ENCODE measurements at regions of chr17 and their contacts with region 1.

Region 1: DNA sequence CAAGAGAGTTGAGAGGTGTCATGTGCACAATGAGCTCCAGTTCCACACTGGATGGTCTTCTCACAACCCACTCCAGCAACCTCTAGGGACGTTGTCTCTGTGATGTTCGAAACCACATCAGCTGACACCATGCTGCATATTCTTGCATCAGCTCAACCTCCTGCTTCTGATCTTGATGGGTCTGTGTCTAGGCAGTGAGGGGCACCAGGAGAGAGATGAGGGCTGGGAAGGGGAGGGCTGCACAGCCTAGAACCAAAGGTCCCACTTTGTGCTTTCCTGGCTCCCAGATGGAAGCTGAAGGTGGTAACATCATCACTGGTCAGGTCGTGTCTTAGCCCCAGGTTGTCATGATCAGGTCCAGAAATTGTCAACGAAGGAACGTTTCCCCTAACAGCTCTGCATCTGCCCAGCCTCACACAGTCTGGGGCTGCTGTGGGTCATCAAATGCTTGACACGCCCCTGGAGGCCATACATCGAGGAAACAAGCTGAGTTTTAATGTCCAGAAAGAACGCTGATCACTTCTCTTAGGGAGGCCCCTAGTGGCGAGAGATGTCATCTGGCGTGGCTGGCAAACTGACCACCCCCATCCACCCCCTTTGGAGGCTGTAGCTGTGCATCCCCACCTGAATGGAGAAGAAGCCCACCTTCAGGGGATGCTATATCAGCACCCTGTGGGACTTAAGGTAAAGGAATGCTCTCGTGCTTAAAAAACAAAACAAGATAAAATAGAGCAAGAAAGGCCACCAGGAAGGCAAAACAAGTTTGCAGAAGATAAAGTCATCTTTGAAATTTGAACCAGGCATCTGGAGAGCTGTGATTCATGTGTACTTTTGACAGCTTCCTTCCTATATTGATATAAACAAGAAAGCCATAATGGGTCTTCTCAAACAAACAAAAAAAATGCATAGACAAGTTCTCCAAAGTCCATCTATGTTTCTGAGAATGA is 58.3 kb downstream of the WIPI1 start:
- DNase-seq: peak; percentile 75
- ATAC-seq: peak; percentile 93
- H3K4me3 Mint-ChIP-seq: no peak overlapping the region
- H3K27ac Mint-ChIP-seq: no peak overlapping the region
- H3K4me1 Mint-ChIP-seq: peaks cover 28% of the 10 kb centered on the region
- H3K27me3 Mint-ChIP-seq: no peaks in the 10 kb centered on the region; the same call in 1 of the 2 replicates
- CTCF ChIP-seq: peak; percentile 29; the same call in 1 of the 2 replicates

Region 2: DNA sequence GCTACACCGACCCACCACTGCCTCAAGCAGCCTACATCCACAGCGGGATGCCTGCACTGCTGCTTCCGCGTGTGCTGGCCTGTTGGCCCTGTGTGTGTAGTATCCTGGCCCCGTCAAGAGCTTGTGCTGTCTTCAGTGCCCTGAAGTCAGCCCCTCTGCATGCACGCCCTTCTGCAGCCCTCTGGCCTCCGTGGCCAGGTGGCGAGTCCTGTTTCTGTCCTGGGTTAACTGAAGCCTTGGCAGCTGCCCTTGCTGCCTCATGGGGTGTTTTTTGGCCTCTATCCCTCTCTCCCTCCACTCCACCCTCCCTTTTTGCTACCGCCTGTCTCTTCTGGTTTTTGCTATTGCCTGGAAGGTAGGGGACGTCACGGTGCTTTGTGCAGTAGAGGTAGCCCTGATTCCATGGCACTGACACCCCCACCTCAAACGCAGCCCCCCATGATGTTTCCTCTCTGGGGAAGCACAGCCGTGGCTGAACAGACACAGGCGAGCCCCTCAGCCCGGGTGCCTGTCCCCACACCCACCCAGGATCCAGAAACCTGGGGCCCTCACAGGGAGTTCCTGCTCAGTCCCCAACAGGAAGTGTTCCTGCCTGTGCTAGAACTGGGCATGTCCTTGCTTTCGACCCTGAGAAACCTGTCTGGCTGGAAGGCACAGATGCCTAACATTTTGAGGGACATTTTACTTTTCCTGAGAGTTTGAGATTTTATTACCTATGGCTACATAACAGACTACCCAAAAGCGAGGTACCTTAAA is 170.0 kb before region 1 on chr17:
- CTCF ChIA-PET with region 1: no interaction called
- POLR2A ChIA-PET with region 1: no interaction called
- DNase-seq: no peak
- ATAC-seq: peak; percentile 26; the same call in 1 of the 2 replicates
- H3K4me3 Mint-ChIP-seq: no peak overlapping the region
- H3K27ac Mint-ChIP-seq: 0 out of 2 replicates have a peak overlapping the region, but pooled peaks have one; percentile 30
- H3K4me1 Mint-ChIP-seq: peaks cover 5% of the 10 kb centered on the region; the same call in 1 of the 2 replicates
- H3K27me3 Mint-ChIP-seq: no peaks in the 10 kb centered on the region
- CTCF ChIP-seq: no peak

Region 3: GRCh38 chr17:68247445-68248198 is 151.3 kb before region 1 on chr17 and contains the start of gene AMZ2:
- CTCF ChIA-PET with region 1: interaction called, 12 read pairs
- POLR2A ChIA-PET with region 1: no interaction called
- DNase-seq: peak; percentile 91
- ATAC-seq: peak; percentile 97
- H3K4me3 Mint-ChIP-seq: peak within 1 kb of the TSS; percentile 80
- H3K27ac Mint-ChIP-seq: peak within 1 kb of the TSS; percentile 72; the same call in 1 of the 2 replicates
- H3K4me1 Mint-ChIP-seq: peaks cover 14% of the 10 kb centered on the region
- H3K27me3 Mint-ChIP-seq: no peaks in the 10 kb centered on the region
- CTCF ChIP-seq: no peak
- total RNA-seq, gene AMZ2: 54.6 to 79.0 TPM (median 73.6 TPM) in 3 replicates

Region 4: DNA sequence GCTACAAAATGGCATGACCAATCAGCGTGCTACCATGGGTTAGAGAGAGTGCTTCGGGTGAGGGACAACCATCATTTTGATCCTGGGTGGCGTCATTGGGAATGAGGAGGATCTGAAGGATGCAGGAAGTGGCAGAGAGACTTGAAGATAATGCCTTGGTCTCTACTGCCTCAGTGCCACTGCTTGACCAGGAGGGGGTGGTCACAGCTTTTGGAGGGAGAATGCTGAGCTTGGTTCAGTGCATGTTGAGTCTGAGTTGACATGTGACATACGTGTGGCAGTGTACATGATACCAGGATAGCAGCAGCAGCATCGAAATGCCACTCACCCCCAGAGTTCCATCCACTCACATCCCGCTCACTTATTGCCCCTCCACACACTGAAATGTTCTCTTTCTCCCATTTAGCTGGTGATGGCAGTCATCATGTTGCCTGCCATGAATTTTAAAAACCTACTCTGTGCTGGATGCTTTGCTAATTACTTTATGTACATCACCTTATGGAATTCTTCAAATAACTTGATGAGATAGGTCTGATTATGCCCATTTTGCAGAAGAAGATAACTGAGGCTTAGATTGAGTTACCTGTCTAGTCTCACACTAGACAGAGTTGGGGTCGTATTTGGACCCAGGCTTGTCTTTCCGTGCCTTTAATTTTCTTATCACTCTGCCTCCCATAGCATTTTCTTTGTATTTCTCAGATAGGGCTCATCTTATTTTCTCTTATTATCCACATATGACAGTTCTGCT is 71.0 kb before region 1 on chr17:
- CTCF ChIA-PET with region 1: interaction called, 19 read pairs
- POLR2A ChIA-PET with region 1: no interaction called
- DNase-seq: no peak
- ATAC-seq: peak; percentile 36
- H3K4me3 Mint-ChIP-seq: no peak overlapping the region
- H3K27ac Mint-ChIP-seq: no peak overlapping the region
- H3K4me1 Mint-ChIP-seq: no peaks in the 10 kb centered on the region
- H3K27me3 Mint-ChIP-seq: peaks cover 6% of the 10 kb centered on the region
- CTCF ChIP-seq: no peak

Region 5: DNA sequence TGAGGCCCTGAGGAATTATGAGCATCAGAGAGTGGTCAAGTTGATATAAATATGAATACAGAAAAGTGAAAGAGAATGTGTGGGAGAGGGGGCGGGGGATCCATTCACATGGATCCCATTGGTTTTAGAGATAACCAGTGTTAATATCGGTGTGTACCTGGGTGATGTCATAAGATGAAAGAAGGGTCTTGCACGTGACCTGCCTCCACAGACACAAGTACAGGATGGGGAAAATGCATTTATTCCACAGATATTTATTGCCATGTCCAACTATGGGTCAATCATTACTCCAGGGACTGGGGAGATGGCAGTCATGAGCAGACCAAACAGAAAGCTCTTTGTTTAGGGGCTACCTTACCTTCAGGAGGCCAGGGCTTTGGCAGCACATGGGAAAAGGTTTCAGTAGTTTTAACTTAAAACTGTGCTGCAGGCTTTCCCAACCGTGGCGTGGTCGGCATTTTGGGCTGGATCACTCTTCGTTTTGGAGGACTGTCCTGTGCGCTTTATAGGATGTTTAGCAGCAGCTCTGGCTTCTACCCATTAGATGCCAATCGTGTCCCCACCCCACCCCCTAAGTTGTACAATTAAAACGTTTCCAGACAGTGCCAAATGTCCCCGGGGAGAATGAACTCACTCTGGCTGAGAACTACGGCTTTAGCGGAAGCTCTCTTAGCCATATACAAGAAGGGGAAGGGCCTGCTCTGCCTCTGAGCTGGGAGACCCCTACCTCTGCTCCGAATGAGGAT is 11.0 kb before region 1 on chr17:
- CTCF ChIA-PET with region 1: interaction called, 26 read pairs
- POLR2A ChIA-PET with region 1: no interaction called
- DNase-seq: no peak
- ATAC-seq: no peak
- H3K4me3 Mint-ChIP-seq: no peak overlapping the region
- H3K27ac Mint-ChIP-seq: 0 out of 2 replicates have a peak overlapping the region, but pooled peaks have one; percentile 1
- H3K4me1 Mint-ChIP-seq: no peaks in the 10 kb centered on the region
- H3K27me3 Mint-ChIP-seq: no peaks in the 10 kb centered on the region; the same call in 1 of the 2 replicates
- CTCF ChIP-seq: no peak

Region 6: GRCh38 chr17:68424942-68425386 is 26.0 kb after region 1 on chr17:
- CTCF ChIA-PET with region 1: interaction called, 20 read pairs
- POLR2A ChIA-PET with region 1: no interaction called
- DNase-seq: peak; percentile 57
- ATAC-seq: peak; percentile 83
- H3K4me3 Mint-ChIP-seq: no peak overlapping the region
- H3K27ac Mint-ChIP-seq: no peak overlapping the region
- H3K4me1 Mint-ChIP-seq: peaks cover 29% of the 10 kb centered on the region
- H3K27me3 Mint-ChIP-seq: no peaks in the 10 kb centered on the region; the same call in 1 of the 2 replicates
- CTCF ChIP-seq: no peak

Region 7: GRCh38 chr17:68457539-68458259 is 58.7 kb after region 1 on chr17:
- CTCF ChIA-PET with region 1: interaction called, 12 read pairs
- POLR2A ChIA-PET with region 1: no interaction called
- DNase-seq: peak; percentile 99
- ATAC-seq: peak; percentile 91
- H3K4me3 Mint-ChIP-seq: peak overlapping the region; percentile 78
- H3K27ac Mint-ChIP-seq: peak overlapping the region; percentile 87
- H3K4me1 Mint-ChIP-seq: peaks cover 66% of the 10 kb centered on the region
- H3K27me3 Mint-ChIP-seq: peaks cover 7% of the 10 kb centered on the region; the same call in 1 of the 2 replicates
- CTCF ChIP-seq: no peak

Region 8: DNA sequence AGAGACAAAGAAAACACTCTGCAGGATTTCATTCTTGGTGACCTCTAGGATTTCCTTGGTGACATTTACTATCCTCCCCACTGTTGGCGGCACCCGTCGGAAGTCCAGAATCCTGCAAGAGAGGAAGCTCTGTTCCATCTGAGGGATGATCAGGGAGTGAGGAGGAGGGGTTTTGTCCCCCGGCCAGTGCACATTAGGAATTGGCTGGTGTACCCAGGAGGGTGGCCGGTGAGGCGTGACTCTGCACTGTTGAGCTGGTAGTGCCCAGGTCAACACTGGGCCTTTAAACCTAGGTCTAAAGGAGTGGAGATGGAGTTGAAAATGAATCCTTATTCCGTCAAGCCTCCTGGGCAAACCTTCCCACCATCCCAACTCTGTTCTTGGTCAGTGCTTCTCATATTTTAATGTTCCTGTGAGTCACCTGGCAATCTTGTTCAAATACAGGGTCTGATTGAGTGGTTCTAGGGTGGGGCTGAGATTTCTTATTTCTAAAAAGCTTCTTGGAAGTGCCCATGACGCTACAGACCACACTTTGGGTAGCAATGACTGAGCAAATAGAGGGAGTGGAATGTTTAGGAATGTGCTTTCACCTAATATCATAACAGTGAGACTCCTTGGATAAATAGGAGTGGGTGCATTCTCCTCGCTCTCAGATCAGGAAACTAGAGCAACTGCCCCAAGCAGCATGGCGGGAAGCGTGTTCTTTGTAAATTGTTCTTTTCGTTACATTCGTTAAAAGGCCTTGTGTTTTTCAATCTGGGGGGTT is 143.9 kb after region 1 on chr17:
- CTCF ChIA-PET with region 1: no interaction called
- POLR2A ChIA-PET with region 1: no interaction called
- DNase-seq: no peak
- ATAC-seq: no peak
- H3K4me3 Mint-ChIP-seq: no peak overlapping the region
- H3K27ac Mint-ChIP-seq: peak overlapping the region; percentile 20; the same call in 1 of the 2 replicates
- H3K4me1 Mint-ChIP-seq: no peaks in the 10 kb centered on the region
- H3K27me3 Mint-ChIP-seq: no peaks in the 10 kb centered on the region
- CTCF ChIP-seq: no peak